ENCODE measurements at regions of chr6 and their contacts with region 1.

Region 1: GRCh38 chr6:169326067-169326799 is 72.6 kb upstream of the THBS2 start:
- DNase-seq: no peak
- H3K4me3 ChIP-seq: no peak overlapping the region
- H3K27ac ChIP-seq: no peak overlapping the region
- H3K4me1 ChIP-seq: no peaks in the 10 kb centered on the region
- H3K27me3 ChIP-seq: no peaks in the 10 kb centered on the region
- CTCF ChIP-seq: peak; percentile 18 to 21

Region 2: GRCh38 chr6:168895102-168895812 is 431.0 kb before region 1 on chr6:
- intact Hi-C with region 1: loop called (anchors 10 kb)
- DNase-seq: peak; percentile 72 to 87
- H3K4me3 ChIP-seq: no peak overlapping the region
- H3K27ac ChIP-seq: no peak overlapping the region
- H3K4me1 ChIP-seq: peaks cover 0 to 12% (median 0%) of the 10 kb centered on the region in 4 donors
- H3K27me3 ChIP-seq: no peaks in the 10 kb centered on the region
- CTCF ChIP-seq: peak; percentile 89 to 93

Region 3: DNA sequence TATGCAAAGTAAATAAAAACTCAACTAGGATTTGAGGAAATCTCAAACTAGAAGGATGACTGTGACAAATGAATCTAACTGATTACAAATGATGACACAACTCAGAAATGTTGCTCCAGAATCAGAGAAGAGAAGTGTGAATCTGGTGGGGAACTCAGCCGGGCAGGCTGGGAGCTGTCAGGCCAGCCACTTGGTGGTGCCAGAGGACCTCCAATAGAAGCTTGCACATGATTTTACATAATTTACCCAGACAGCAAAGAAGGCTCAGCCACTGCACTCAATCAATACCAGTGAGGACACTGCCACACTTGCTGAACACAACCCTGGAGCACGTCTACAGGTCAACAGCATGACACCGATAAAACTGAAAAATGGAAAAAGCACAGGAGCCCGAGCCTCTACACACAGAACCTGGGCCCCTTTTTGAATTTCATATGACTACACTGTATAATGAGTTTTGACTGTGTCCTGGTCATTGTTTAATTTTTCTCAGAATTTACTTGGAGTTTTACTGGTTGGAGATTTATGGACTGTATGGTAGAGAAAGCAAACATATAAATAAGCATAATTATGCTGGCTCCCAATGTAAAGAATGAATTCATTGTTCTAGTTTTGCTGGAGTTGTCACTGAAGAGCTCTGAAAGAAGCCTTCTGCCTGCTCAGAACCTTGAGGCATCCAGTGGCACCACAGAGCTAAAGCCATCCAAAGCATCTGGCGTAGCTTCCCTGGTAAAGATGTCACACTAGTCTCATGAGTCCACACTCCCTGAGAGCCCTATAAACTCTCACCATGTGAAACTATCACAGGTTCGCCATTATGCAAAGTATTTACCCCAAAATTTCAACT is 369.1 kb before region 1 on chr6:
- intact Hi-C with region 1: loop called (anchors 10 kb)
- DNase-seq: peak; percentile 67 to 83
- H3K4me3 ChIP-seq: no peak overlapping the region
- H3K27ac ChIP-seq: peak overlapping the region in 1 of 2 donors; percentile 36
- H3K4me1 ChIP-seq: peaks cover 0 to 10% (median 0%) of the 10 kb centered on the region in 4 donors
- H3K27me3 ChIP-seq: no peaks in the 10 kb centered on the region
- CTCF ChIP-seq: peak; percentile 85 to 89

Region 4: DNA sequence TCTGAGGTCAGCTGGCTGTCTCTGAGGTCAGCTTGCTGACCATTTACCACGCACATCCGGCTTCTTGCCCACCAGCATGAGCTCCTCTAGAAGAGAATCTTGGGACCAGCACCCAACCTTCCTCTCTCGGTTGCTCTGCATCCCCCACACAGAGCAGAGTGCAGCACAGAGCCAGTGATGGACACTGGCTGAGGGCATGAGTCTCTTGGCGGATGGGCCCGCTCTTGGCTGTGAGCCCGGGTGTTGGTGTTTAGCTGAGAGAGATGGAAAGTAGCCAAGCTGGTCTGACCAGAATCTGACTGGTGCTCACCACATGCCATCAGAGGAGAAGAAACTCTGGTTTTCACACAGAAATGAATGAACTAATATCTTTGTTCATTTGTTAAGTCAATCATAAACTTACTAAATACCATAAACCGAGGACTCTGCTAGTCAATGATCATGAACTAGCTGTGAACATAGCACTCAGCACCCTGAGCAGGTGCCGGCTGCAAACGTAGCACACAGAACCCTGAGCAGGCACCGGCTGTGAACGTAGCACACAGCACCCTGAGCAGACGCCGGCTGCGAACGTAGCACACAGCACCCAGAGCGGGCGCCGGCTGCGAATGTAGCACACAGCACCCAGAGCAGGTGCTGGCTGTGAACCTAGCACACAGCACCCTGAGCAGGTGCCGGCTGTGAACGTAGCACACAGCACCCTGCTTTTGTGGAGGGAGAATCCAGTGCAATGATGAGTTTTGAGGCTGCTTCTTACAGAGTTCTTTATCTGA is 62.2 kb before region 1 on chr6:
- intact Hi-C with region 1: no loop called
- DNase-seq: no peak
- H3K4me3 ChIP-seq: no peak overlapping the region
- H3K27ac ChIP-seq: no peak overlapping the region
- H3K4me1 ChIP-seq: peaks cover 0 to 6% (median 0%) of the 10 kb centered on the region in 4 donors
- H3K27me3 ChIP-seq: no peaks in the 10 kb centered on the region
- CTCF ChIP-seq: no peak

Region 5: GRCh38 chr6:169709293-169709692 is 383.1 kb after region 1 on chr6:
- intact Hi-C with region 1: no loop called
- DNase-seq: no peak
- H3K4me3 ChIP-seq: no peak overlapping the region
- H3K27ac ChIP-seq: no peak overlapping the region
- H3K4me1 ChIP-seq: peaks cover 0 to 8% (median 1%) of the 10 kb centered on the region in 4 donors
- H3K27me3 ChIP-seq: no peaks in the 10 kb centered on the region
- CTCF ChIP-seq: no peak